PC-3 (cell line): ENCODE measurements at regions of chr2 and their contacts with region 1.

Region 1: DNA sequence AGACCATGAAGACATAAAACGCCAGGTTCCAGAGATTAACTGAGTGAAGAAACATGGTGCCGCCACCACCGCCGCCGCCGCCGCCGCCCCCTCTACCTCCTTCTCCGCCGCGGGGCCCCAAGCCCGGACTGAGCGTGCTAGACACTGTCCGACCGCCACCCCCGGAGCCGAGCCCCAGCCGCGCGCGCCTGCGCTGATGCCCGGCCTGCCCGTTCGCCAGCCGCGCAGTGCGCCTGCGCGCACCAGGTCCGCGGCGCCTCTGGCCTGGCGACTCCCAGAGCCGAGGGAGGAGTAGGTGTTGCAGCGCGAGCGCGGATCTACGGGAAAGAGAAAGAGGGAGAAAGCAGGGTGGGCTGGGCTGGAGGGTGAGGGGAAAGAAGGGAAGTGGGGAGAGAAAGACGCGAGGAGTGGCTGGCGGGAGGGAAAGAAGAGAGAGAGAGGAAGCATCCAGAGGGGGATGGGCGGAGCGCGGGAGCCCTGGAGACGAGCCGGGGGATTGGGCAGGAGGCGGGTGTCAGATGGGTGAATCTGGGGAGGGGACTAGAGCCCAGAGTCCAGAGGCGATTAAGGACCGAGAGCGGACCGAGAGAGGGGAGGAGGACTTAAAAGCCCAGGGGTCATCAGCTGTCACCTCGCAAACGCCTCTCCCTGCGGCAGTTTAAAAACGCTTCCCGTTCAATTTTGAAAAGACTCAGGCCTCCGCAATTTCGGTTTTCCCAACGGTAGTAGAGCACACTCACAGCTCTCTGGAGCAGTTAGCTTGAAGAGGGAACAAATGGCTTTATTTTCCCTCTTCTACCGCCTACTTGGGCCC is at the start of gene PGAP1:
- DNase-seq: peak; percentile 93
- ATAC-seq: peak; percentile 83
- H3K4me3 ChIP-seq: peak within 1 kb of the TSS; percentile 98
- H3K27ac ChIP-seq: peak within 1 kb of the TSS; percentile 58
- H3K4me1 ChIP-seq: peaks cover 25% of the 10 kb centered on the region
- H3K27me3 ChIP-seq: no peaks in the 10 kb centered on the region
- CTCF ChIP-seq: no peak
- total RNA-seq, gene PGAP1: 3.5 and 4.5 TPM in 2 replicates

Region 2: GRCh38 chr2:196742685-196743084 is 184.1 kb before region 1 on chr2:
- CTCF ChIA-PET with region 1: no interaction called
- POLR2A ChIA-PET with region 1: no interaction called
- intact Hi-C with region 1: no loop called
- DNase-seq: no peak
- ATAC-seq: no peak
- H3K4me3 ChIP-seq: no peak overlapping the region
- H3K27ac ChIP-seq: no peak overlapping the region
- H3K4me1 ChIP-seq: no peaks in the 10 kb centered on the region
- H3K27me3 ChIP-seq: no peaks in the 10 kb centered on the region
- CTCF ChIP-seq: no peak

Region 3: GRCh38 chr2:196798980-196799379 is 127.8 kb before region 1 on chr2:
- CTCF ChIA-PET with region 1: no interaction called
- POLR2A ChIA-PET with region 1: no interaction called
- intact Hi-C with region 1: loop called (anchors 5 kb)
- DNase-seq: no peak
- ATAC-seq: no peak
- H3K4me3 ChIP-seq: peak overlapping the region; percentile 94
- H3K27ac ChIP-seq: peak overlapping the region; percentile 21; the same call in 1 of the 2 replicates
- H3K4me1 ChIP-seq: peaks cover 21% of the 10 kb centered on the region
- H3K27me3 ChIP-seq: no peaks in the 10 kb centered on the region
- CTCF ChIP-seq: no peak

Region 4: GRCh38 chr2:196849895-196850294 is 76.9 kb before region 1 on chr2:
- CTCF ChIA-PET with region 1: no interaction called
- POLR2A ChIA-PET with region 1: no interaction called
- intact Hi-C with region 1: loop called (anchors 5 kb)
- DNase-seq: peak; percentile 50
- ATAC-seq: peak; percentile 96
- H3K4me3 ChIP-seq: no peak overlapping the region
- H3K27ac ChIP-seq: no peak overlapping the region
- H3K4me1 ChIP-seq: 0 out of 2 replicates have a peak, but pooled peaks cover 3% of the 10 kb centered on the region
- H3K27me3 ChIP-seq: no peaks in the 10 kb centered on the region
- CTCF ChIP-seq: peak; percentile 68

Region 5: DNA sequence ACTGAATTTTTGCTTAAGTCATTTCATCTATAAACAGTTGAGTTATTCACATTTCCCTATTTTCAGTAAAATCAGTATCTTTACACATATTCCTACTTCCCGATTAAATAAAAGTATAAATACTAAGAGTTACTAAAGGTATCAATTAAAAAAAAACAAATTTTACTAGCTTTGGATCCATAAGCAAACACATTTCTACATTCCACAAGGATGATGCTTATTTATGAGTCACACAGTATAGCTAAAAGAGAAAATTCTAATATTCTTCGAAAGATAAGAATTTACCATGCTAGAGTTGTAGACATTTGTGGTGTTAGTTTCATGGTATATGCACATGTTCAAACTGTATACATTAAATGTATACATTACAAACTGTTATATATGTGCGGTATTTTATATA is 23.9 kb before region 1 on chr2:
- CTCF ChIA-PET with region 1: no interaction called
- POLR2A ChIA-PET with region 1: no interaction called
- intact Hi-C with region 1: no loop called
- DNase-seq: peak; percentile 77
- ATAC-seq: peak; percentile 81
- H3K4me3 ChIP-seq: peak overlapping the region; percentile 34; the same call in 1 of the 2 replicates
- H3K27ac ChIP-seq: peak overlapping the region; percentile 49
- H3K4me1 ChIP-seq: peaks cover 31% of the 10 kb centered on the region
- H3K27me3 ChIP-seq: no peaks in the 10 kb centered on the region
- CTCF ChIP-seq: no peak

Region 6: DNA sequence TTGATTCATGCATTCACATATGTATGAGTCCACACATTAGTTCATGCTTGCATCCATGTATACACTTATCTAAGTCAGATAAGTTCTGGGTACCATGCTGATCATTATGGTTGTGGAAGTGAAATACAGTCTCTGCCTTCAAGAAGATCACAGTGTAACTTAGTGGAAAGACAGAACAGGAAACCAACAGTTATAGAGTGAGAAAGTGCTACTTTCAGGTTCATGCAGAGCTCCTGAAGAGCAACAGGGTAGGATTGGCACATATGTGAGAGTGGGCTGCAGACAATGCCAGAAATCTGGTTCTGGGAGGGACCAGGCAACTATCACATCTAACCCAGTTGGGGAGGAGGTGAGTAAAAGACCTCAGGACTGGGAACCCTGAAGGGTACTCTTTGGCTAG is 35.1 kb after region 1 on chr2:
- CTCF ChIA-PET with region 1: no interaction called
- POLR2A ChIA-PET with region 1: no interaction called
- intact Hi-C with region 1: no loop called
- DNase-seq: no peak
- ATAC-seq: no peak
- H3K4me3 ChIP-seq: no peak overlapping the region
- H3K27ac ChIP-seq: no peak overlapping the region
- H3K4me1 ChIP-seq: peaks cover 4% of the 10 kb centered on the region; the same call in 1 of the 2 replicates
- H3K27me3 ChIP-seq: no peaks in the 10 kb centered on the region
- CTCF ChIP-seq: no peak

Region 7: GRCh38 chr2:196987649-196988364 is 61.0 kb after region 1 on chr2:
- CTCF ChIA-PET with region 1: no interaction called
- POLR2A ChIA-PET with region 1: no interaction called
- intact Hi-C with region 1: loop called (anchors 1 kb)
- DNase-seq: peak; percentile 95
- ATAC-seq: peak; percentile 96
- H3K4me3 ChIP-seq: peak overlapping the region; percentile 52
- H3K27ac ChIP-seq: peak overlapping the region; percentile 94
- H3K4me1 ChIP-seq: peaks cover 26% of the 10 kb centered on the region
- H3K27me3 ChIP-seq: no peaks in the 10 kb centered on the region
- CTCF ChIP-seq: no peak

Region 8: DNA sequence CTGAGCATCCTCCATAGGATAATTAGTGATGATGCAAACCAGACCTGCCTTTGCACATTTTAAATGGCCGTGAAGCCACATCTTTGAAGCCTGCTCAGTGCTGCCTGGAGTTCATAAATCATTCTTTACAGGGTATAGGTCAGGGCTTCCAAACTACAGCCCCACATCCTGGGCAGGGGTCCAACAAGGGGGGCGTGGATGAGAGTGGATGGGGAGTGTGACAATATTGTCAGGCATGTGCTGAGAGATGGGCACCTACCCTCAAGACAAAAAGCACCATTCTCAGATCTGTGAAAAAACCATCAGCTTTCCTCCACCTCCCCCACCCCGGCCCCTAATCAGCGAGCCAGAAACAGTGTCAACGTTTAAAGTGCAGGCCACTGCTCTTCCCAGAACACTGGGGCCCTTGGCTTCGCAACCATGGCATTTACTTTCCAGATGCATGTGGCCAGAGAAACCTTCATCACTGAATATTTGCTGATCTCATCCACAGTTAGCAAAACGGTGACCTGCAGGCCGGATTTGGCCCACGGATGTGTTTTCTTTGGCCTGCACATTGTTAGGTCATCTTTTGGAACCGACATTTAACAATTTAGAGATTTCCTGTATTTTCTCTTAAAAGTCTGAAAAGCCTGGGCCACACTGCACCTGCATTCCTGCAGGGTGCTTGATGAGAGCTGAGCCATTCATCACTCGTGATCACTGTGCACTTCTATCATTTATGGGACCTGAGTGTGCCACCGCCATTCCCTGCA is 253.2 kb after region 1 on chr2:
- CTCF ChIA-PET with region 1: no interaction called
- POLR2A ChIA-PET with region 1: no interaction called
- intact Hi-C with region 1: loop called (anchors 10 kb)
- DNase-seq: peak; percentile 28
- ATAC-seq: peak; percentile 90
- H3K4me3 ChIP-seq: no peak overlapping the region
- H3K27ac ChIP-seq: peak overlapping the region; percentile 21; the same call in 1 of the 2 replicates
- H3K4me1 ChIP-seq: peaks cover 14% of the 10 kb centered on the region
- H3K27me3 ChIP-seq: no peaks in the 10 kb centered on the region
- CTCF ChIP-seq: no peak